ENCODE measurements at regions of chr4 and their contacts with region 1.

Region 1: DNA sequence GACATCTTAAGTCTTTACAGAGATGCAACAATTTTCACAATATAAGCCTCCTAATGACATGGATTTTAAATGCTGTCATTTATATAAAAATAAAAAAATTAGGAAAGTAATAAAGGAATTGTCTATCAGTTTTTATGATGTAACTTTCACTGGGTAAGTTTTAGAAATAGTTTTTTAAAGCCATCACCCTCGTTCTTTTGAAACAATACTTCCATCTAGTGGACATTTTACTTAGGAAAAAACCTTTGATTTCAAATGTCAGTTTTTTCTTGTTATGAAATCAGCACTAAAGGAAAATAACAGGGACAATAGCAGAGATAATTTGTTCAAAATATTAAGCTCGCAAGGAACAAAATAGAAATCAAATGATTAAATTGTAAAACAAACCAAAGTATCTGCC is 24.3 kb upstream of the NDNF start:
- DNase-seq: no peak

Region 2: DNA sequence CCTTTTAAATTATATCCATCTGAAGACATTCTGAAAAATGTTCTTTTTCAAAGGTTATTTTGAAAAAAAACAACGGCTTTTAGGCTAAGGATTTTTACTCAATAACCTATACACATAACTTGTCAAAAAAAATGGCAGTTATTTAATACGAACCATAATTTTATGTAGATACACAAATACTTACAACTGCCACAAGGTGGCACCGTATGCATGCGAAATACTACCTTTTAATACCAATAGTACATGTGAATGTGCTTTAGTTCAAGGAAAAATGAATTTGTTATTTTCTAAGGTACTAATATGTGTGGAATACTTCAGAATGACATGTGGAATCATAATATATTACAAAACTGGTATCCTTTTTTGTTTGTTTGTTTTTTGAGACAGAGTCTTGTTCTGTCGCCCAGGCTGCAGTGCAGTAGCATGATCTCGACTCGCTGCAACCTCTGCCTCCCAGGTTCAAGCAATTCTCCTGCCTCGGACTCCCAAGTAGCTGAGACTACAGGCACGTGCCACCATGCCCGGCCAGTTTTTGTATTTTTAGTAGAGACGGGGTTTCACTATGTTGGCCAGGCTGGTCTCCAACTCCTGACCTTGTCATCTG is 1025.3 kb before region 1 on chr4:
- intact Hi-C with region 1: loop called (anchors 2 kb)
- DNase-seq: peak in 3 of 10 donors; percentile 16 to 42 (median 36)

Region 3: GRCh38 chr4:120156120-120156718 is 940.4 kb before region 1 on chr4:
- intact Hi-C with region 1: loop called (anchors 1 kb)
- DNase-seq: no peak

Region 4: DNA sequence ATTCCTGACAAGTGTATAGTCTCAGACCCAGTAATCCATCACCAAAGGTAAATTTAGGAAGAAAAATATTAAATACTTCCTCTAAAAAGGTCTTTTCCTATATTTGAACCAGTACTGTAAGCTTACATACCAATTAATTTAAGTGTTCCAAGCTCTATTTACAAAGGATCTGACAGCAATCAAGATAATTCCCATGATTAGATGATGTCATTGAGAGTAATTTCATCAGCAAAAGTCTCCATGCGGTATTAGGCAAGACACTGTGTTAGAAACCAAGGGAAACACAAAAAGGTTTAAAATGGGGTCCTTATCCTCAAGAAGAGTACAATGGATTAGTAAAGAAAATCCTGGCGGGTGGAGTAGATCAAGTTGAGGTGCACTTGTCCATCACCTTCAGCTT is 372.6 kb before region 1 on chr4:
- intact Hi-C with region 1: loop called (anchors 10 kb)
- DNase-seq: no peak

Region 5: GRCh38 chr4:120865985-120866384 is 230.6 kb before region 1 on chr4:
- intact Hi-C with region 1: no loop called
- DNase-seq: peak in 3 of 10 donors; percentile 8 to 67 (median 28)

Region 6: DNA sequence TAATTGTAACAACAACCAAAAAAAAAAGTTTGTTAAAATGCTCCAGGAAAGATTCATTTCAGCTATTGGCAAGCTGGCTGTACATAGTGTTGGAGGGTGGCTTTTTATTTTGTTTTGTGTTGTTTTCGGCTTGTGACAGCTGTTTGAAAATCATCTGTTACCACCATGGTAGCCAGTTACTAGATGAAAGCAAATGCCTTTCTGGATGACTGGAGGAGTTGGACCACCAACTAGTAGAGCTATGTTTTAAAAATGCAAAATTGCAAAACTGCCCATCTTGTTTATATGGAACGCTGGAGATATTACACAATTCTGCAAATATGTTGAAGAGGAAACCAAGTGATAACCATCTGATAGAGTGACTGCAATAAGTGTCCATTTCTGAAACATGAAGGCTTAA is 120.7 kb after region 1 on chr4:
- intact Hi-C with region 1: no loop called
- DNase-seq: no peak

Region 7: DNA sequence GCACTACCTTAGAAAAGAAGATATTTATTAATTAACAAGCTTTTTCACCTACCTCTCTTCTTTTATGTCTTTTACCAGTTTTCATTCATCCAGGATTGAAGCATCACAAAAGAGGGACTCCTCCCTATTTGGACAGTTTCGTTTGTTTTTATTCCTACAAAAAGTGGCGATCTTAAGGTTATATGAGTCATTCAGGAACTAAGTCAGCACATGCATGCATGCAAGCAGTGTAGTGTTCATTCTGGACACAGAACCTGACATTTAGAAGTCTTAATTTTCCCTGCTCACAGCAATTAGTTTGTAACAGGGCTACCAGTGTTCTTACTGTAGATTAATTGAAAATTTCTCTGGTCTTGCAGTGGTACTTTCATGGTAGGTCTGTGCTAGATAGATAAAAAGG is 332.1 kb after region 1 on chr4:
- intact Hi-C with region 1: no loop called
- DNase-seq: no peak

Measured in posterior cingulate gyrus (tissue), 11 donors.